ENCODE measurements at regions of chr22 and their contacts with region 1.

Region 1: GRCh38 chr22:31661851-31662656 is at the start of gene PISD:
- DNase-seq: peak; percentile 98
- ATAC-seq: peak; percentile 89
- H3K4me3 Mint-ChIP-seq: peak within 1 kb of the TSS; percentile 84
- H3K27ac Mint-ChIP-seq: peak within 1 kb of the TSS; percentile 94
- H3K4me1 Mint-ChIP-seq: peaks cover 30% of the 10 kb centered on the region
- H3K27me3 Mint-ChIP-seq: peaks cover 2% of the 10 kb centered on the region
- total RNA-seq, gene PISD: 30.3 to 37.9 TPM

Region 2: DNA sequence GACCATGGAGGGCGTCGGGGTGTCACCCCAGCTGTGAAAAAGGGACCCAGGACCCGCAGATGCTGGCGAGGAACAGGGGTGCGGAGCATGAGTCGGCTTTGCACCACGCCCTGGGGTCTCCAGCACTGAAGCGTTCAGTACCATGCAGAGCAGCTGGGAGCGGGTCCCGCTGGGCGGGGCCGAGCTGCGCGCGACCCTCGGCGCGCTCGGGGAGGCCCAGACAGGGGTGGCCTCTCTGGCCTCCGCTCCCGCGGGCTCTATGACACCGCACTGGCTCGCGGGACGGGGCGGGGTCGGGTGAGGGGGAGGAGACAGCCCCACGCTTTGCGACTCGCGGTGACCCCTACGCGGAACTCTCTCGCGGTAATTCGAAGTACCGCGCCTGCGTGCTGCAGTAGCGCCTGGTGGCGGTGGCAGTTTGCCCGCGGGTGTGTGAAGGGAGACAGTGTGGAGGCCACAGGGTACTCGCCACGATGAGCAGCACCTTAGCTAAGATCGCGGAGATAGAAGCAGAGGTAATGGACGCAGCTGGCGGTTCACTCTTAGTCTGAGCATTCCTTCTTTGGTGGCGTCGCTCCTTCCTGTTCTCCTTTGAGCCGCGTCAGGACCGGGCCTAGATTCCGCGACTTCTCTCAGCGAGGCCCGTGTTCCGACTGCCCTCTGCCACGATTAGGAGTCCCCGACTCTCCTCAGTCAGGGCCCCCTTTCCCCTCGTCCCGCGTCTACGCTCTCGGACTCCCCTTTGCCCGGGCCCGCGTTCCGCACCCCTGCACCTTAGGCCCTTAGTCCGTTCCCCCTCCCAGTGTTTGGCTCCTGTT is 262.6 kb before region 1 on chr22 and contains the start of gene DRG1:
- CTCF ChIA-PET with region 1: no interaction called
- POLR2A ChIA-PET with region 1: no interaction called
- intact Hi-C with region 1: loop called in 1 of 2 experiments (anchors 1 kb)
- DNase-seq: peak; percentile 99
- ATAC-seq: peak; percentile 98
- H3K4me3 Mint-ChIP-seq: peak within 1 kb of the TSS; percentile 99
- H3K27ac Mint-ChIP-seq: peak within 1 kb of the TSS; percentile 91
- H3K4me1 Mint-ChIP-seq: peaks cover 18% of the 10 kb centered on the region
- H3K27me3 Mint-ChIP-seq: peaks cover under 1% of the 10 kb centered on the region
- total RNA-seq, gene DRG1: 104 to 106 TPM

Region 3: GRCh38 chr22:31646186-31647089 is 15.6 kb before region 1 on chr22:
- CTCF ChIA-PET with region 1: interaction called, 6 read pairs
- POLR2A ChIA-PET with region 1: interaction called, 3 read pairs
- intact Hi-C with region 1: loop called in 1 of 2 experiments (anchors 2 kb)
- DNase-seq: peak; percentile 60
- ATAC-seq: peak; percentile 86
- H3K4me3 Mint-ChIP-seq: peak overlapping the region; percentile 28
- H3K27ac Mint-ChIP-seq: peak overlapping the region; percentile 82
- H3K4me1 Mint-ChIP-seq: peaks cover 47% of the 10 kb centered on the region
- H3K27me3 Mint-ChIP-seq: no peaks in the 10 kb centered on the region

Region 4: GRCh38 chr22:31836010-31836409 is 174.0 kb after region 1 on chr22:
- CTCF ChIA-PET with region 1: no interaction called
- POLR2A ChIA-PET with region 1: no interaction called
- intact Hi-C with region 1: loop called in 1 of 2 experiments (anchors 10 kb)
- DNase-seq: no peak
- ATAC-seq: no peak
- H3K4me3 Mint-ChIP-seq: no peak overlapping the region
- H3K27ac Mint-ChIP-seq: no peak overlapping the region
- H3K4me1 Mint-ChIP-seq: peaks cover 5% of the 10 kb centered on the region
- H3K27me3 Mint-ChIP-seq: no peaks in the 10 kb centered on the region

Region 5: DNA sequence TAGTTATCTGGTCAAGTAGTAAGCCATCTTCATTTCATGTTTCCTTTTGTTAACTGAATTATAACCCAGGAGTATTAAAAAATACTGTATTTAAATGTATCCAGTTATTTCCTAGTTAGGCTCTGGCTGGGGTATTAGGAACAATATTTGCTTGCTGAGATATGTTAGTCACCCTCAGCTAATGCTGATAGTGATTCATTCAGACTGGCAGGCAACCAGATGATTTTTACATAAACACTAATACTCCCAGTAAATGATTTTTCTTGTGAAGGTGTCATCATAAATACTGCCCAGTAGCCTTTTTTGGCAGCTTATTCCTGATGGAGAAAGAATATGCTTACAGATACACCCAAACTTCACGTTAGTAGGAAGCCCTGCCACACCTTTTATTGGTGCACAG is 290.4 kb after region 1 on chr22:
- CTCF ChIA-PET with region 1: interaction called, 37 read pairs
- POLR2A ChIA-PET with region 1: interaction called, 4 read pairs
- intact Hi-C with region 1: loop called (anchors 1 to 2 kb)
- DNase-seq: no peak
- ATAC-seq: no peak
- H3K4me3 Mint-ChIP-seq: no peak overlapping the region
- H3K27ac Mint-ChIP-seq: no peak overlapping the region
- H3K4me1 Mint-ChIP-seq: peaks cover 67% of the 10 kb centered on the region
- H3K27me3 Mint-ChIP-seq: no peaks in the 10 kb centered on the region

Region 6: DNA sequence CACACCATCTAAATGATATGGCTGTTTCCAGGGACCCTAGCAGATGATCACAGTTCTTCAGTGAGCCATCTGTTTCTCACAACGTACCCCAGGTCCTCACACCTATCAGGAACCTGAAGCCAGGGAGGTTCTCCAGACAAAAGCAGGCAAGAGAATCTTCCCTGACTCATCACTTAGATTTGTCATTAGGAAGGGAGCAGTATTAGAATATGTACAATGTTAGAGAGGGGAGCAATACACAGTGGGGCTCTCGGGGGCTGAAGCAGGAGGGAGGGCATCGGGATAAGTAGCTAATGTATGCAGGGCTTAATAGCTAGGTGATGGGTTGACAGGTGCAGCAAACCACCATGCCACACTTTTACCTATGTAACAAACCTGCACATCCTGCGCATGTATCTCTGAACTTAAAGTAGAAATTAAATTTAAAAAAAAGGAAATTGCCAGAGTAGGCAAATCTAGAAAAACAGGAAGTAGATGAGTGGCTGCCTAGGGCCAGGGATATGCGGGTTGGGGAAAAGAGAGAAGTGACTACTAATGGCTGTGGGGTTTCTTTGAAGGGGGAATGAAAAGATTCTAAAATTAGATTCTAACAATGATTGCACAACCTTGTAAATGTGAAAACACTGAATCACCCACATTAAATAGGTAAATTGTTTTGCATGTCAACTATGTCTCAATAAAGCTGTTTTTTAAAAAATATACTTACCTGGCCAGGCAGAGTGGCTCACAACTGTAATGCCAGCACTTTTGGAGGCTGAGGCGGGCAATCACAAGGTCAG is 482.6 kb after region 1 on chr22:
- CTCF ChIA-PET with region 1: no interaction called
- POLR2A ChIA-PET with region 1: interaction called, 6 read pairs
- intact Hi-C with region 1: loop called in 1 of 2 experiments (anchors 5 kb)
- DNase-seq: no peak
- ATAC-seq: peak; percentile 7
- H3K4me3 Mint-ChIP-seq: no peak overlapping the region
- H3K27ac Mint-ChIP-seq: no peak overlapping the region
- H3K4me1 Mint-ChIP-seq: peaks cover 38% of the 10 kb centered on the region
- H3K27me3 Mint-ChIP-seq: no peaks in the 10 kb centered on the region

Region 7: GRCh38 chr22:32474635-32475467 is 812.8 kb after region 1 on chr22 and contains the start of gene FBXO7:
- CTCF ChIA-PET with region 1: no interaction called
- POLR2A ChIA-PET with region 1: interaction called, 5 read pairs
- intact Hi-C with region 1: loop called in 1 of 2 experiments (anchors 2 kb)
- DNase-seq: peak; percentile 93
- ATAC-seq: peak; percentile 83
- H3K4me3 Mint-ChIP-seq: peak within 1 kb of the TSS; percentile 90
- H3K27ac Mint-ChIP-seq: peak within 1 kb of the TSS; percentile 98
- H3K4me1 Mint-ChIP-seq: peaks cover 21% of the 10 kb centered on the region
- H3K27me3 Mint-ChIP-seq: no peaks in the 10 kb centered on the region
- total RNA-seq, gene FBXO7: 81.3 to 85.6 TPM